CD4-positive, alpha-beta T cell (primary cell): ENCODE measurements at regions of chr16 and their contacts with region 1.

Region 1: GRCh38 chr16:3457434-3458252 is 14.2 kb downstream of the NAA60 start:
- DNase-seq: peak; percentile 74 to 97 (median 90)
- ATAC-seq: peak; percentile 86
- H3K4me3 ChIP-seq: peak overlapping the region; percentile 83
- H3K4me3 Mint-ChIP-seq: peak overlapping the region; percentile 76
- H3K27ac ChIP-seq: peak overlapping the region; percentile 84 to 90
- H3K27ac Mint-ChIP-seq: peak overlapping the region; percentile 83
- H3K4me1 ChIP-seq: peaks cover 46% of the 10 kb centered on the region
- H3K4me1 Mint-ChIP-seq: peaks cover 59% of the 10 kb centered on the region
- H3K27me3 ChIP-seq: no peaks in the 10 kb centered on the region
- H3K27me3 Mint-ChIP-seq: no peaks in the 10 kb centered on the region
- CTCF ChIP-seq: peak; percentile 39

Region 2: GRCh38 chr16:3023669-3024478 is 433.8 kb before region 1 on chr16 and contains the starts of genes HCFC1R1 and THOC6:
- CTCF ChIA-PET with region 1: no interaction called
- POLR2A ChIA-PET with region 1: no interaction called
- intact Hi-C with region 1: loop called in 1 of 2 experiments (anchors 10 kb)
- DNase-seq: peak; percentile 90 to 99 (median 95)
- ATAC-seq: peak; percentile 76
- H3K4me3 ChIP-seq: peak within 1 kb of the TSS; percentile 78
- H3K4me3 Mint-ChIP-seq: peak within 1 kb of the TSS; percentile 66
- H3K27ac ChIP-seq: peak within 1 kb of the TSS; percentile 80 to 96
- H3K27ac Mint-ChIP-seq: peak within 1 kb of the TSS; percentile 78
- H3K4me1 ChIP-seq: peaks cover 77% of the 10 kb centered on the region
- H3K4me1 Mint-ChIP-seq: peaks cover 51% of the 10 kb centered on the region
- H3K27me3 ChIP-seq: peaks cover 0 to 4% of the 10 kb centered on the region in 2 experiments
- H3K27me3 Mint-ChIP-seq: peaks cover 1% of the 10 kb centered on the region
- CTCF ChIP-seq: no peak
- total RNA-seq, gene HCFC1R1: 8.9 to 11.0 TPM
- total RNA-seq, gene THOC6: 12.0 to 12.9 TPM

Region 3: GRCh38 chr16:3165111-3165822 is 292.4 kb before region 1 on chr16:
- CTCF ChIA-PET with region 1: no interaction called
- POLR2A ChIA-PET with region 1: no interaction called
- intact Hi-C with region 1: loop called (anchors 5 kb)
- DNase-seq: no peak
- ATAC-seq: no peak
- H3K4me3 ChIP-seq: peak overlapping the region; percentile 21
- H3K4me3 Mint-ChIP-seq: peak overlapping the region; percentile 74
- H3K27ac ChIP-seq: no peak overlapping the region
- H3K27ac Mint-ChIP-seq: peak overlapping the region; percentile 56
- H3K4me1 ChIP-seq: peaks cover 11% of the 10 kb centered on the region
- H3K4me1 Mint-ChIP-seq: peaks cover 11% of the 10 kb centered on the region
- H3K27me3 ChIP-seq: peaks cover 5 to 7% of the 10 kb centered on the region in 2 experiments
- H3K27me3 Mint-ChIP-seq: no peaks in the 10 kb centered on the region
- CTCF ChIP-seq: no peak

Region 4: GRCh38 chr16:3182608-3183444 is 274.8 kb before region 1 on chr16:
- CTCF ChIA-PET with region 1: no interaction called
- POLR2A ChIA-PET with region 1: interaction called, 3 read pairs
- intact Hi-C with region 1: loop called in 1 of 2 experiments (anchors 5 kb)
- DNase-seq: peak in 8 of 14 experiments; percentile 16 to 75 (median 41)
- ATAC-seq: peak; percentile 45
- H3K4me3 ChIP-seq: peak overlapping the region; percentile 48
- H3K4me3 Mint-ChIP-seq: peak overlapping the region; percentile 82
- H3K27ac ChIP-seq: no peak overlapping the region
- H3K27ac Mint-ChIP-seq: no peak overlapping the region
- H3K4me1 ChIP-seq: peaks cover 27% of the 10 kb centered on the region
- H3K4me1 Mint-ChIP-seq: peaks cover 34% of the 10 kb centered on the region
- H3K27me3 ChIP-seq: peaks cover 65 to 72% of the 10 kb centered on the region in 2 experiments
- H3K27me3 Mint-ChIP-seq: peaks cover 91% of the 10 kb centered on the region
- CTCF ChIP-seq: peak; percentile 38

Region 5: GRCh38 chr16:3305109-3306068 is 152.3 kb before region 1 on chr16 and contains the starts of genes TIGD7 and ZNF75A:
- CTCF ChIA-PET with region 1: interaction called, 4 read pairs
- POLR2A ChIA-PET with region 1: no interaction called
- intact Hi-C with region 1: loop called in 1 of 2 experiments (anchors 5 kb)
- DNase-seq: peak; percentile 67 to 96 (median 79)
- ATAC-seq: peak; percentile 92
- H3K4me3 ChIP-seq: peak within 1 kb of the TSS; percentile 91
- H3K4me3 Mint-ChIP-seq: peak within 1 kb of the TSS; percentile 86
- H3K27ac ChIP-seq: peak within 1 kb of the TSS; percentile 76 to 89
- H3K27ac Mint-ChIP-seq: peak within 1 kb of the TSS; percentile 82
- H3K4me1 ChIP-seq: peaks cover 28% of the 10 kb centered on the region
- H3K4me1 Mint-ChIP-seq: peaks cover 22% of the 10 kb centered on the region
- H3K27me3 ChIP-seq: no peaks in the 10 kb centered on the region
- H3K27me3 Mint-ChIP-seq: no peaks in the 10 kb centered on the region
- CTCF ChIP-seq: no peak
- total RNA-seq, gene TIGD7: 1.5 to 1.7 TPM
- total RNA-seq, gene ZNF75A: 41.7 to 42.2 TPM

Region 6: GRCh38 chr16:3413730-3414379 is 43.8 kb before region 1 on chr16:
- CTCF ChIA-PET with region 1: no interaction called
- POLR2A ChIA-PET with region 1: no interaction called
- intact Hi-C with region 1: no loop called
- DNase-seq: no peak
- ATAC-seq: no peak
- H3K4me3 ChIP-seq: no peak overlapping the region
- H3K4me3 Mint-ChIP-seq: no peak overlapping the region
- H3K27ac ChIP-seq: no peak overlapping the region
- H3K27ac Mint-ChIP-seq: no peak overlapping the region
- H3K4me1 ChIP-seq: no peaks in the 10 kb centered on the region
- H3K4me1 Mint-ChIP-seq: no peaks in the 10 kb centered on the region
- H3K27me3 ChIP-seq: peaks cover 0 to 3% of the 10 kb centered on the region in 2 experiments
- H3K27me3 Mint-ChIP-seq: no peaks in the 10 kb centered on the region
- CTCF ChIP-seq: no peak

Region 7: GRCh38 chr16:3443108-3444031 is 14.3 kb before region 1 on chr16 and contains the starts of genes NAA60 and ZNF597:
- CTCF ChIA-PET with region 1: interaction called, 11 read pairs
- POLR2A ChIA-PET with region 1: interaction called, 11 read pairs
- intact Hi-C with region 1: no loop called
- DNase-seq: peak; percentile 50 to 92 (median 72)
- ATAC-seq: peak; percentile 90
- H3K4me3 ChIP-seq: peak within 1 kb of the TSS; percentile 71
- H3K4me3 Mint-ChIP-seq: peak within 1 kb of the TSS; percentile 98
- H3K27ac ChIP-seq: peak within 1 kb of the TSS; percentile 70 to 79
- H3K27ac Mint-ChIP-seq: peak within 1 kb of the TSS; percentile 95
- H3K4me1 ChIP-seq: peaks cover 25% of the 10 kb centered on the region
- H3K4me1 Mint-ChIP-seq: peaks cover 24% of the 10 kb centered on the region
- H3K27me3 ChIP-seq: no peaks in the 10 kb centered on the region
- H3K27me3 Mint-ChIP-seq: no peaks in the 10 kb centered on the region
- CTCF ChIP-seq: no peak
- total RNA-seq, gene NAA60: 27.2 to 27.8 TPM
- total RNA-seq, gene ZNF597: 2.3 to 2.5 TPM